Activated CD4-positive, alpha-beta T cell treated with anti-CD3 and anti-CD28 coated beads, Interleukin-2, amount 10 ng/mL, durations not matched to agents 24 days and 14 days (primary cell): ENCODE measurements at regions of chr11 and their contacts with region 1.

Region 1: DNA sequence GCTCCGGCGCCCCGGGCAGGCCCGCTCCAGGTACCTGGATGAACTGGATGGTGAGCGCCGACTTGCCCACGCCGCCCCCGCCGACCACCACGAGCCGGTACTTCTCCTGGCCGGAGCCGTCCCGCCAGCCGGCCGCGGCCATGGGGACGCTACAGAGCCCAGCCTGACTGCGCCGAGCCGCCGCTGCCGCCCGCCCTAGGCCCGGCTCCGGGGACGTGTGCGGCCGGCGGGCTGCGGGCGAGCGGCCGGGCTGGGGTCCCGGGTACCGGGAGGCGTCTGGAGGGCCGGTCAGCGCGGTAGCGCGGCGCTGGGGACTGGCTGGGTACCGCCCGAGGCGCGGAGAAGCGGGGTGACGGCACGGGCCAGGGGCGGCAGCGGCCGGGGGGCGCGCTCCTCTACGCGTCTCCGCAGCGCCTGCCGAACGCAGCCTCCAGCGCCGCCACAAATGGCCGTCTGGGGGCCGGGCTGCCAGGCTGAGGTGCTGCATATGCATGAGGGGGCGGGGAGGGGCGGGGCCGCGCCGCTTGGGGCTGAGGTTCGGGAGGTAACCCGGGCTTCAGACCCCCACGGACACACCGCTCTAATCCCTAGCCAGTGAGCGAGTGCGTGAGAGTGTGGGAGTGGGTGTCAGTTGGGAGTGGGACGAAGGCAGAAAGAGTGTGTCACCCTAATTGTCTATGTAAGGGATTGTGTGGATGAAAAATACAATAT is at the start of gene RRAS2:
- DNase-seq: peak; percentile 94
- H3K4me3 Mint-ChIP-seq: peak within 1 kb of the TSS; percentile 90
- H3K27ac Mint-ChIP-seq: peak within 1 kb of the TSS; percentile 86
- H3K4me1 Mint-ChIP-seq: peaks cover 44% of the 10 kb centered on the region
- H3K27me3 Mint-ChIP-seq: peaks cover 5% of the 10 kb centered on the region
- total RNA-seq, gene RRAS2: 78.9 and 80.6 TPM in 2 replicates

Region 2: GRCh38 chr11:14237444-14237961 is 121.4 kb before region 1 on chr11:
- intact Hi-C with region 1: no loop called
- DNase-seq: no peak
- H3K4me3 Mint-ChIP-seq: no peak overlapping the region
- H3K27ac Mint-ChIP-seq: no peak overlapping the region
- H3K4me1 Mint-ChIP-seq: no peaks in the 10 kb centered on the region
- H3K27me3 Mint-ChIP-seq: peaks cover 24% of the 10 kb centered on the region

Region 3: GRCh38 chr11:14300661-14301304 is 58.1 kb before region 1 on chr11:
- intact Hi-C with region 1: loop called (anchors 2 kb)
- DNase-seq: peak; percentile 82
- H3K4me3 Mint-ChIP-seq: no peak overlapping the region
- H3K27ac Mint-ChIP-seq: no peak overlapping the region
- H3K4me1 Mint-ChIP-seq: peaks cover 16% of the 10 kb centered on the region
- H3K27me3 Mint-ChIP-seq: no peaks in the 10 kb centered on the region

Region 4: DNA sequence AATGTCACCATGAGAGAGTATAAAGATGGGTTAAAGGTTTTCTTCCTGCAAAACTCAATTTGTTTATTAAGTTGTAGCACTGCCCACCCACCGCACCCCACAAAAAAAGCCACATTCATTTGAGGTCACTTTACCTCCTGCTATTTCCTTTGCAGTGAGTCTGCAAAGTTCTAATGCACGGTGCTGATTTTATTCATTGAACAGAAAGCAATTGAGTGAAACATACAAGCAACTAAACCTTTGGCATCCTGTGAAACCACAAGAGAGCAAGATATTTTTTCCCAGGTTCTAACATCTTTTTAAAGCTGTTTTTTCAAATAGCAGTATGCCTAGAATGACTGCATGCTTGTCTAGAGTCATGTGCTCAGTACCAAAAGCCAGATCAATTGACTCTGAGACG is 38.9 kb before region 1 on chr11:
- intact Hi-C with region 1: loop called (anchors 2 kb)
- DNase-seq: peak; percentile 83
- H3K4me3 Mint-ChIP-seq: peak overlapping the region; percentile 22
- H3K27ac Mint-ChIP-seq: peak overlapping the region; percentile 62
- H3K4me1 Mint-ChIP-seq: peaks cover 54% of the 10 kb centered on the region
- H3K27me3 Mint-ChIP-seq: no peaks in the 10 kb centered on the region

Region 5: DNA sequence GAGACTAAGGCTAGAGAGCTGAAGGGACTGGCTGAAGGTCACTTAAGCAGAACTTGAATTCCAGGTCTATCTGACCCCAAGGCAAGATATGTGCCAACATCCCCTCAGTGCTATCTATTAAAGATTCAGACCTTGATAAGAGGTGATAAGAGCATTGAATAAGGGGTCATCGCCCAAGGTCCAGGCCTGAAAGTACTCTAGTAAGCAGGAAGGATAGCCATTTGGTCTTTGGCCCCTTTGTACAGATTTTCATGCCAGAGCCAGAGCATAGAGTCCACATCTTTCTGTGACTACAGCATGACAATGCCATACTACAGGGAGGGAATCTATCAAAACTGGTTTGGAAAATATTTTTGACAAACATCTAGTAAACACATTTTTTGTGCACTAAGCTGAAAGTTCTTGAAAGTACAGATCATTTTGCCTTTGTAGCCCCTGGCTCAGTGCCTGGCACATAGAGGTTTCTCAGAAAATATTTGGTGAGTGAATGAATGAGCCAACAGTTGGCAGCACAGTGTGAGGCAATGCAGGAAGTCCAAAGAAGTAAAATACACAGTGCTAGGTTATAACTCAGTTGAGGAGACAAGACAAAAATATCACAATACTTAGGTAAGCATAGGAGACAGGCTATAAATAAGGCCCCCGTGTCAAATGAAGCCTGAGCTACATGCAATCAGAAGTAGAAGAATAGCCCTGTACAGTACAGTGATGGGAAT is 15.2 kb after region 1 on chr11:
- intact Hi-C with region 1: loop called (anchors 1 kb)
- DNase-seq: no peak
- H3K4me3 Mint-ChIP-seq: no peak overlapping the region
- H3K27ac Mint-ChIP-seq: peak overlapping the region; percentile 68
- H3K4me1 Mint-ChIP-seq: peaks cover 48% of the 10 kb centered on the region
- H3K27me3 Mint-ChIP-seq: peaks cover 5% of the 10 kb centered on the region